Psoas muscle (tissue), 8 donors: ENCODE measurements at regions of chr18 and their contacts with region 1.

Region 1: DNA sequence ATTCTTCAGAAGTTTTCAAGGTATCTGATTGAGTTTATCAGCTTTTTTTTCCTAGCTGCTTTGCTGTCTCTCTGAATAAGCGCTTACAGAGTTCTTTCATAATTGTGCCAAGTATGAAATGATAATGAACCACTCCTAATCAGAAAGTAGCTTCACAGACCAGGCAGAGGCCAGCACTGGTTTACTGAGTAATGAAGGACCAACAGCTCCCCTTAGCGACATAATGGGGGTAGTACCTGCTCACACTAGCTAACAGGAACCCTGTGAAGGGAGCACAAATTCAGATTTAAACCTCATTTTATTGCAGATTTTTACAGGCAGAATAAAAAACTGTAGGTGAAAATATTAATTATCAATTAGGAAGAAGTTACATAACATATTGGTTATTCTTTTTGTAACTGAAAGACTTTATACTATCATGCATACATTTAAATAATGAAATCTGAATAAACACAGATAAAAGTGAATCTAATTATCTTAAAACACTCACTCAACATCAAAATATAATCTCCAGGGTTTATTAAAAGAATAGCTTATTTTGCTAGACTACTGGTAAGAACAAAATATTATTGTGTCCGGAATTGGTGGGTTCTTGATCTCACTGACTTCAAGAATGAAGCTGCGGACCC is 53.7 kb upstream of the LRRC30 start:
- DNase-seq: no peak
- ATAC-seq: peak in 2 of 4 donors; percentile 58 to 77
- H3K4me3 ChIP-seq: no peak overlapping the region
- H3K27ac ChIP-seq: no peak overlapping the region
- H3K4me1 ChIP-seq: no peaks in the 10 kb centered on the region
- H3K27me3 ChIP-seq: no peaks in the 10 kb centered on the region
- CTCF ChIP-seq: peak; percentile 53

Region 2: GRCh38 chr18:6920099-6920899 is 256.9 kb before region 1 on chr18:
- intact Hi-C with region 1: loop called in 1 of 2 experiments (anchors 2 kb)
- DNase-seq: peak in 1 of 2 donors; percentile 18
- ATAC-seq: peak in 2 of 4 donors; percentile 35 to 50
- H3K4me3 ChIP-seq: no peak overlapping the region
- H3K27ac ChIP-seq: no peak overlapping the region
- H3K4me1 ChIP-seq: no peaks in the 10 kb centered on the region
- H3K27me3 ChIP-seq: no peaks in the 10 kb centered on the region
- CTCF ChIP-seq: peak; percentile 50